ENCODE measurements at regions of chr13 and their contacts with region 1.

Region 1: DNA sequence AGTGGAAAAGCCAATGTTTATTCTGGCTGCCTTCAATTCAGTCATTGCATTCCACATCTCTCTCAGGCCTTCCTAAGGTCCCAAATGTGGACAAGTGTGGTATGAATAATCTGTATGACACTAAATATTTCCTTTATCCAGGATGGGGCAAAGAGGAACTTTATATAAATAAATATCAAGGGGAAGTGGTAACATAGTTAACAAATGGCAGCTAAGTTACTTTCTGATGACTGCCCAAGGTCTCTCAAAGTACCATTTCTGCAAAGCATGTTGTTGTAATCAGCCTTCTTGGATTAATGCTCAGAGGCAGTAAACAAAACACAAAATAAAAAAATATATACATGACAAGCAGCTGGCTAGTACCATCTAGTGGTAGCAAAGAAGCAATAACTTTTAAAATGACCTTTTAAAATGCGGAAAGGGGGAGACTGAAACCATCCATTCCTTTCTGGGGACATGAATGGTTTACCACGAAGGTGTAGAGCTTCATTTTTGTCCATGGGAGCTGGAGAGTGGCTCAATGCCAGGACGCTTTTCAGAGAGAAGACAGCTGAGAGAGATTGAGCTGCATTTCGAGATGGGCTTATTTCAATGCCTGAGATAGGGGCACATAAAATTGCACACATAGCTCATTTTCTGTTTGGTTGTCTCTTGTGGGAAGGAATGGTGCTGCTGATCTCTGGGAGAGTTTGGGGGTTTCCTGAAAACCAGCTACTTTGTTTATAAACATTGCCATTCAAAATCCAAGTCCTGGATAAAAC is 259.2 kb downstream of the RFC3 start:
- DNase-seq: no peak
- ATAC-seq: peak in 2 of 8 donors; percentile 33 to 57
- H3K4me3 ChIP-seq: no peak overlapping the region
- H3K27ac ChIP-seq: no peak overlapping the region
- H3K4me1 ChIP-seq: peaks cover 0 to 11% (median 5%) of the 10 kb centered on the region in 9 donors
- H3K27me3 ChIP-seq: no peaks in the 10 kb centered on the region
- CTCF ChIP-seq: peak; percentile 40 to 82 (median 61)

Region 2: GRCh38 chr13:33799950-33800592 is 277.1 kb before region 1 on chr13:
- intact Hi-C with region 1: loop called in 7 of 10 experiments (anchors 2 to 10 kb)
- DNase-seq: no peak
- ATAC-seq: peak in 6 of 8 donors; percentile 18 to 64 (median 46)
- H3K4me3 ChIP-seq: peak overlapping the region in 4 of 10 donors; percentile 2 to 33 (median 10)
- H3K27ac ChIP-seq: peak overlapping the region in 4 of 10 donors; percentile 6 to 79 (median 52)
- H3K4me1 ChIP-seq: peaks cover 0 to 41% (median 20%) of the 10 kb centered on the region in 9 donors
- H3K27me3 ChIP-seq: no peaks in the 10 kb centered on the region
- CTCF ChIP-seq: peak in 7 of 9 donors; percentile 30 to 71 (median 61)

Region 3: DNA sequence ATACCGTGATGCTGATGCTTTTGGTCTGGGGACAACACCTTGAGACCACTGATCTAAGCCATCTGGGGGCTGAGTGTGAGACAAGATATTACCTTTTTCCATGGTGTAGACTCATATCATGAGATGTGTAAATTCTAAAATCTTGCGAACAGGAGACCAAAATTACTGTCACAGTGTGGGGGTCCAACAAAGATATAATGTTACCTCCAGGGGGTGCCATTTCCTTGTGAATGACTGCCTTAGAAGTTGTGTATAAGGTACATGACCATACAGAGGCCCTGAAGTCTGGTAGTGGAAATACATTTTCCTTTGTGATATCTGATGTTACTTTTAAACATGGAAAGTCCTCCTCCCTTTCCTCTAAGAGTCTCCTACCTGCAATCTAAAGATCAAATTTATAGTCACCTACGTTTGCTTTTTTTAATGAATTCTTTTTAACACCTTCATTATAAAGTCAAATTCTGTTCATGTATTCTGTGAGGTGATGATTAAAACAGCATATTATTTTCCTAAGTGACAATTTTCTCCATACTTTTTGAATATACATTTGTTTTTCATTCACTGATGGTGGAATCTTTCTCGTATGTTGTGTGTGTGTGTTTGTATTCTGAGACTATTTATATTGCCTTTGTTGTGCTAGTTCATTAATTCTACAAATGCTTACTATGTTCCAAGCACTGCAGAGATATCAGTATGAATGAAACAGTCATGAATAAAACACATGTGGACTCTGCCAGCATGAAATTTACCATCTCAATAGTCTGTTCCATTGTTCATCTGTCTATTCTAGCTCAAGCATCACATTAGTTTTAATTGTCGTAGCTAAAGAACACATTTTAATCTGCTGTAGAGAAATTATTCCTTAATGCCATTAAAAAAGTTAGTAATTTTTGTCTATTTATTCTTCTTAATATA is 145.5 kb before region 1 on chr13:
- intact Hi-C with region 1: loop called in 8 of 10 experiments (anchors 2 to 5 kb)
- DNase-seq: peak in 1 of 2 donors; percentile 28
- ATAC-seq: peak in 7 of 8 donors; percentile 64 to 85 (median 75)
- H3K4me3 ChIP-seq: no peak overlapping the region
- H3K27ac ChIP-seq: no peak overlapping the region
- H3K4me1 ChIP-seq: peaks cover 0 to 13% (median 0%) of the 10 kb centered on the region in 9 donors
- H3K27me3 ChIP-seq: no peaks in the 10 kb centered on the region
- CTCF ChIP-seq: peak in 8 of 9 donors; percentile 23 to 69 (median 56)

Region 4: GRCh38 chr13:34087791-34088190 is 10.7 kb after region 1 on chr13:
- intact Hi-C with region 1: no loop called
- DNase-seq: no peak
- ATAC-seq: no peak
- H3K4me3 ChIP-seq: no peak overlapping the region
- H3K27ac ChIP-seq: no peak overlapping the region
- H3K4me1 ChIP-seq: no peaks in the 10 kb centered on the region
- H3K27me3 ChIP-seq: no peaks in the 10 kb centered on the region
- CTCF ChIP-seq: no peak

Region 5: GRCh38 chr13:34207334-34207733 is 130.2 kb after region 1 on chr13:
- intact Hi-C with region 1: no loop called
- DNase-seq: peak; percentile 21 to 30
- ATAC-seq: peak in 5 of 8 donors; percentile 73 to 92 (median 82)
- H3K4me3 ChIP-seq: no peak overlapping the region
- H3K27ac ChIP-seq: peak overlapping the region in 4 of 10 donors; percentile 45 to 57 (median 50)
- H3K4me1 ChIP-seq: peaks cover 0 to 12% (median 0%) of the 10 kb centered on the region in 9 donors
- H3K27me3 ChIP-seq: no peaks in the 10 kb centered on the region
- CTCF ChIP-seq: no peak

Region 6: DNA sequence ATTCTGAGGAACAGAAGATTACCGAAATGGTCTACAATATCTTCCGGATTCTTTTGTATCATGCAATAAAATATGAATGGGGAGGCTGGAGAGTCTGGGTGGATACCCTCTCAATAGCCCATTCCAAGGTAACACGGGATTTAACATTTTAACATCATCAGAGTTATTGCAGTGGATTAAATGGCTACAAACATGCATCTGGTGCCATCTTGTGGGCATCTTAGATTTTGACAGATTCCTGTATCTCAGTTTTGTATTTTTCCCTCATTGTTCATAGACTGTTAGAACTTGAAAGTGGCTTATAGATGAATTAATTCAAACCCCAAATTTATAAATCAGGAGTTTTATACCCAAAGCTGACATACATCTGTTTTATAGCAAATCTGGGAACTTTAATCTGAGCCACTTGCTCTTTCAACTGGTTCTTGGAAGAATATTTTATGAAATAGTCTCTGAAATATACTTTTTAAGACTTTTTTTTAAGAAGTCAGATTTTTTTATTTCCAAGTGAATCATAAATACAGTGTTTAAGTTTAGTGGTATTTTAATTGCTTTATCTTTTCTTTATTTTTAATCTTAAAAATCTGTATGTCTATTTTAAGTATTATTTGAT is 1080.1 kb after region 1 on chr13:
- intact Hi-C with region 1: loop called in 7 of 10 experiments (anchors 5 to 10 kb)
- DNase-seq: peak in 1 of 2 donors; percentile 42
- ATAC-seq: peak in 6 of 8 donors; percentile 29 to 67 (median 56)
- H3K4me3 ChIP-seq: no peak overlapping the region
- H3K27ac ChIP-seq: no peak overlapping the region
- H3K4me1 ChIP-seq: peaks cover 0 to 13% (median 2%) of the 10 kb centered on the region in 9 donors
- H3K27me3 ChIP-seq: no peaks in the 10 kb centered on the region
- CTCF ChIP-seq: peak; percentile 57 to 85 (median 74)